Esophagus squamous epithelium (tissue), 5 donors: ENCODE measurements at regions of chr4 and their contacts with region 1.

Region 1: GRCh38 chr4:112636688-112637551 is at the starts of genes LARP7 and ZGRF1:
- DNase-seq: peak; percentile 96
- H3K4me3 ChIP-seq: peak within 1 kb of the TSS; percentile 47 to 81 (median 69)
- H3K27ac ChIP-seq: peak within 1 kb of the TSS; percentile 87 to 98 (median 95)
- H3K4me1 ChIP-seq: peaks cover 10 to 35% (median 12%) of the 10 kb centered on the region in 3 donors
- H3K27me3 ChIP-seq: no peaks in the 10 kb centered on the region
- CTCF ChIP-seq: peak; percentile 97 to 99 (median 99)
- POLR2A ChIP-seq: peak in 2 of 4 donors; percentile 41 to 71
- total RNA-seq, gene LARP7: 21.0 to 38.1 (median 30.1) TPM
- total RNA-seq, gene ZGRF1: 4.0 to 9.0 (median 4.6) TPM

Region 2: DNA sequence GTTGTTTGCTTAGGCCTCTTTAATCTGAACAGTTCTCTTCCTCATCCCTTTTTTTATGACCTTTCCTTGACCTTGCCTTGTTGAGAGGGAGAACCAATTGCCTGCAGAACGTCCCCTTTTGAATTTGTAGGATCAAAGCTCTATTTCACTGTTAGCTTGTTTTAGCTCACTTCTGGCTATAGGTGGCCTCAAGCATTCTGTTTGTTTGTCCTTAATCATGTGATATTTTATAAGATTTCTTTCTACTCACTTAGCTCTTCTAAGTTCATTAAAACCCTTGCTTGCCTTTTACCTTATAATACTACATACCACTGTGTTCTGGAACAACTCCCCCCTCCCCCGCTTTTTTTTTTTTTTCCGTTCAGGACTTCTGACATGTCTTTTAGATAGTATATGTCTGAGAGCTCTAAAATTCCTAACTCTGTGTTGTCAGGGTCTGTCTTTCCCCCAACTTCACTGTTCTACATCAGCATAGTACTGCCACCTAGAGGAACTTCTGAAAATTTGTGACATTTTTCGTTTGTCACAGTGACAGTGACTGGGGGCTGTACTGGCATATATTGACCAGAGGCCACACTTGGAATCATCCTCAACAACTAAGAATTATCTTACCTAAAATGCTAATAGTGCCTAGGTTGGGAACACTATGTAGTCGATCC is 128.5 kb after region 1 on chr4:
- intact Hi-C with region 1: loop called (anchors 10 kb)
- DNase-seq: no peak
- H3K4me3 ChIP-seq: no peak overlapping the region
- H3K27ac ChIP-seq: no peak overlapping the region
- H3K4me1 ChIP-seq: peaks cover 0 to 7% (median 0%) of the 10 kb centered on the region in 3 donors
- H3K27me3 ChIP-seq: no peaks in the 10 kb centered on the region
- CTCF ChIP-seq: peak in 2 of 6 experiments; percentile 14 to 33
- POLR2A ChIP-seq: no peak

Region 3: DNA sequence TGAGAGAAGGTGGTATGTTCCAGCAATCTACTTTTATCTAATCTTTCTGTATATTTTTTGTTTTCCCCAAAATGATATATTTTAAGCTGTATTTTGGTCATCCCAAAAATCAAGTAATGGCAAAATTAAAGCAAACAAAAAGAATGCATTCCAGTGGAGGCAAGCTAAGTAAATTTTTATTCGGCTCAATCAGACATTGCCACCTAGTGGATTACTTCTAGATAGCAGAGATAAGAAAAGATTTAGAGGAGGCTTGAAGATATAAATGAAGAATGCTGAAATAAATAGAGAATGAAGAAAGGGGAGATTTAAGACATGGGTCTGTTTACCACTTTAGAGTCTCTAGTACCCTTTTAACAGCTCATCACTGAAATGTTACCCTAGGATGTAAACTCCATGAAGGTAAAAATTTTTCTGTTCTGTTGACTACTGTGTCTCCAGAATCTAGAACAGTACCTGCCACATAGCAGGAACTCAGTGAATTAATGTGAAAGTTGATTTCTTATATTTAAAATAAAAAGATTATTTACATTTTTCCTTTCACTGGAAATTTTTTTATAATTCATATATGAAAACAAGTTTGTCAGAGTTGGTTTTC is 301.6 kb after region 1 on chr4:
- intact Hi-C with region 1: loop called (anchors 10 kb)
- DNase-seq: no peak
- H3K4me3 ChIP-seq: no peak overlapping the region
- H3K27ac ChIP-seq: no peak overlapping the region
- H3K4me1 ChIP-seq: no peaks in the 10 kb centered on the region
- H3K27me3 ChIP-seq: no peaks in the 10 kb centered on the region
- CTCF ChIP-seq: peak; percentile 27 to 70 (median 60)
- POLR2A ChIP-seq: no peak